ENCODE measurements at regions of chr18 and their contacts with region 1.

Region 1: DNA sequence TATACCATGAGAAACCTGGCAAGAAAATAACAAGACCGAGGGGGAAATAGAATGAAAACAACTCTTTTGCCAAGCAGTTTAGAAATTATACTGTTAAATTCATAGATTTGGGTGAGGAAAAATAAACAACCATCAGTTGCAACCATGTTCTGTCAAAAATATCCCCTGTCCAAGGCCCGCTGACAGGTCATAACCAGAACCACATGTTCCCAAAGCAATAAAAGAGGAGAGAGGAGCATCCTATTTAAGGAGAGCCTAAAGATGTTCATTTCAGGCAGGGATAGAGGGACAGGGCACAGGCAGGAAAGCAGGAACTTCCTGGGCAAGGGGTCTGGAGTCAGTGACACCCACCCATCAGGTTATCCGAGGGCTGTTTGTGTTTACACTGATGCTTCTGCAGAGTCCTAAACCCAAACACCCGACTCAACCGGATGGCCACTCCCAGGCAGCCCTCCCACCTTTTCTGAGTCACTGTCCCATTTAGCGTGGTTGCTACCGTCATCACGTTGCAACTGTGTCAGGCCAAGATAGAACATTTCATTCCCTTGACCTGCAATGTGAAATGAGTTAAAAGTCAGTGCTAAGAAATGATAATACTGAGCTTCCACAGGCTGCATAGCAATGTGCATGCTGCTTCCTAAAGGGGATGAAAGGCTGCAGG is 468.3 kb upstream of the RAB12 start:
- DNase-seq: peak in 3 of 5 donors; percentile 27 to 87 (median 40)
- ATAC-seq: peak; percentile 81 to 88 (median 86)
- H3K4me3 ChIP-seq: no peak overlapping the region
- H3K27ac ChIP-seq: peak overlapping the region in 11 of 12 donors; percentile 36 to 84 (median 74)
- H3K4me1 ChIP-seq: peaks cover 9 to 57% (median 44%) of the 10 kb centered on the region in 12 donors
- H3K27me3 ChIP-seq: no peaks in the 10 kb centered on the region
- CTCF ChIP-seq: no peak
- POLR2A ChIP-seq: no peak

Region 2: DNA sequence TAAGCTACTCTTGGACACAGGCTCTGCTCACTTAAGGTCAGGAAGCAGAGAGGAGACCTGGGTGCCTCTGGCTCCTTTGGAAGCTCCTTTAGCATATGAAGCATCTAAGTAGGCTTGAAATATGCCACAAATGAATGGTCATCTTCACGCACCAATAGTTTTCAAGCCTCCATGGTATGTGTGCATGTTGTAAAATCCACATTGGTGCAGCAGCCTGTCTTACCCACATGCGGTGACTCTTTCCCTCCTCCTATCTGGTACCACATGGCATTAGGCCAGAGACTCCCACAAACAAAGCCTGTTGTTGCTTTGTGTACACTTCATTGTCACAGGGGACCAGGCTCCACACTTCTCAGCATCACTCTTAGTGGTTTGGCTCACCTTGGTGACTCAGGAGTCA is 26.1 kb after region 1 on chr18:
- intact Hi-C with region 1: no loop called
- DNase-seq: no peak
- ATAC-seq: no peak
- H3K4me3 ChIP-seq: no peak overlapping the region
- H3K27ac ChIP-seq: no peak overlapping the region
- H3K4me1 ChIP-seq: peaks cover 0 to 20% (median 3%) of the 10 kb centered on the region in 12 donors
- H3K27me3 ChIP-seq: no peaks in the 10 kb centered on the region
- CTCF ChIP-seq: no peak
- POLR2A ChIP-seq: no peak

Region 3: DNA sequence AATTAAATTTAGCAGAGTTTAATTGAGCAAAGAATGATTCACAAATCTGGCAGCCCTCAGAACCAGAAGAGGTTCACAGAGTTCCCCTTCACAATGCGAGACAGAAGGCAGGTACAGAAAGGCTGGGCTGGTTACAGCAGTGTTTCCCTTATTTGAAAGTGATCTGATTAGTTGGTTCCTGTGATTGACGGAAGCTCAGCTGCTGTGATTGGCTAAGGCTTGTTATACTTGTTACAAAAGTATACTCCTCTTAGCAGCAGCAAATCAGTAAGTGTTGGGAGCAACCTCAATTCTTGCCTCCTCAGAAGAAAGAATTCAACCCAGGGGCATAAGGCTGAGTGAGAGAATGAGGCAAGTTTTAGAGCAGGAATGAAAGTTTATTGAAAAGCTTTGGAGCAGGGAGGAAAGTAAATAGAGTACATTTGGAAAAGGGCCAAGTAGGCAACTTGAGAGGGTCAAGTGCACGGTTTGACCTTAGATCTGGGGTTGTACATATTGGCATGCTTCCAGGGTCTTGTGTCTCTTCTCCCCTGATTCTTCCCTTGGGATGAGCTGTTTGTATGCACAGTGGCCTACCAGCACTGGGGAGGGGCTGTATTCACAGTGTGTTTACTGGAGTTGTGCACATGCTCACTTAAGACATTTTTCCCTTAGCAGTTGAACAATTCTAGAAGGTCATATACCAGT is 36.5 kb after region 1 on chr18:
- intact Hi-C with region 1: loop called in 1 of 10 experiments (anchors 2 kb)
- DNase-seq: no peak
- ATAC-seq: peak; percentile 80 to 92 (median 84)
- H3K4me3 ChIP-seq: no peak overlapping the region
- H3K27ac ChIP-seq: peak overlapping the region in 8 of 12 donors; percentile 17 to 58 (median 36)
- H3K4me1 ChIP-seq: peaks cover 4 to 40% (median 30%) of the 10 kb centered on the region in 12 donors
- H3K27me3 ChIP-seq: no peaks in the 10 kb centered on the region
- CTCF ChIP-seq: no peak
- POLR2A ChIP-seq: no peak

Region 4: DNA sequence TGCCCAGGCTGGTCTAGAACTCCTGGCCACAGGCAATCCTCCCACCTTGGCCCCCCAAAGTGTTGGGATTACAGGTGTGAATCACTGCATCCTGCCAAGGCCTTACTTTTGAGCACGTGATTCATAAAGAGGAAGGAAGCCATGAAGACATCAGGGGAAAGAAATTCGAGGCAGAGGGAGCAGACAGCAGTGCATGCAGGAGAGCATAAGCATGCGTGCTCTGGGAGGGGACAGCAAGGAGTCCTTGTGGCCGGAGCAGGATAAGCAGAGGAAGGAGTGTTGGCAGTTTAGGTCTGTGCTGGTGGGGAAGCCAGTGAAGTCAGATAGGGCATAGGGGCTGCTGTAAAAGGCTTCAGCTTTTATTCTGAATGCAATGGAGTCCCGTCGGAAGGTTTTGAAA is 67.7 kb after region 1 on chr18:
- intact Hi-C with region 1: loop called in 1 of 10 experiments (anchors 2 kb)
- DNase-seq: no peak
- ATAC-seq: no peak
- H3K4me3 ChIP-seq: no peak overlapping the region
- H3K27ac ChIP-seq: no peak overlapping the region
- H3K4me1 ChIP-seq: peaks cover 0 to 14% (median 0%) of the 10 kb centered on the region in 12 donors
- H3K27me3 ChIP-seq: no peaks in the 10 kb centered on the region
- CTCF ChIP-seq: no peak
- POLR2A ChIP-seq: no peak

Measured in heart left ventricle (tissue), 16 donors.